PC-3 (cell line): ENCODE measurements at regions of chr9 and their contacts with region 1.

Region 1: GRCh38 chr9:86098824-86099700 is at the start of gene GOLM1:
- DNase-seq: peak; percentile 63
- ATAC-seq: peak; percentile 80
- H3K4me3 ChIP-seq: peak within 1 kb of the TSS; percentile 95
- H3K27ac ChIP-seq: peak within 1 kb of the TSS; percentile 39
- H3K4me1 ChIP-seq: peaks cover 21% of the 10 kb centered on the region
- H3K27me3 ChIP-seq: no peaks in the 10 kb centered on the region
- CTCF ChIP-seq: no peak
- total RNA-seq, gene GOLM1: 55.8 and 56.2 TPM in 2 replicates

Region 2: GRCh38 chr9:85586684-85587083 is 512.4 kb before region 1 on chr9:
- CTCF ChIA-PET with region 1: no interaction called
- POLR2A ChIA-PET with region 1: no interaction called
- intact Hi-C with region 1: no loop called
- DNase-seq: no peak
- ATAC-seq: no peak
- H3K4me3 ChIP-seq: no peak overlapping the region
- H3K27ac ChIP-seq: no peak overlapping the region
- H3K4me1 ChIP-seq: no peaks in the 10 kb centered on the region
- H3K27me3 ChIP-seq: no peaks in the 10 kb centered on the region
- CTCF ChIP-seq: no peak

Region 3: GRCh38 chr9:86046930-86047341 is 52.1 kb before region 1 on chr9:
- CTCF ChIA-PET with region 1: no interaction called
- POLR2A ChIA-PET with region 1: interaction called, 5 read pairs
- intact Hi-C with region 1: loop called (anchors 5 kb)
- DNase-seq: no peak
- ATAC-seq: peak; percentile 58
- H3K4me3 ChIP-seq: no peak overlapping the region
- H3K27ac ChIP-seq: no peak overlapping the region
- H3K4me1 ChIP-seq: peaks cover 11% of the 10 kb centered on the region; the same call in 1 of the 2 replicates
- H3K27me3 ChIP-seq: no peaks in the 10 kb centered on the region
- CTCF ChIP-seq: no peak

Region 4: DNA sequence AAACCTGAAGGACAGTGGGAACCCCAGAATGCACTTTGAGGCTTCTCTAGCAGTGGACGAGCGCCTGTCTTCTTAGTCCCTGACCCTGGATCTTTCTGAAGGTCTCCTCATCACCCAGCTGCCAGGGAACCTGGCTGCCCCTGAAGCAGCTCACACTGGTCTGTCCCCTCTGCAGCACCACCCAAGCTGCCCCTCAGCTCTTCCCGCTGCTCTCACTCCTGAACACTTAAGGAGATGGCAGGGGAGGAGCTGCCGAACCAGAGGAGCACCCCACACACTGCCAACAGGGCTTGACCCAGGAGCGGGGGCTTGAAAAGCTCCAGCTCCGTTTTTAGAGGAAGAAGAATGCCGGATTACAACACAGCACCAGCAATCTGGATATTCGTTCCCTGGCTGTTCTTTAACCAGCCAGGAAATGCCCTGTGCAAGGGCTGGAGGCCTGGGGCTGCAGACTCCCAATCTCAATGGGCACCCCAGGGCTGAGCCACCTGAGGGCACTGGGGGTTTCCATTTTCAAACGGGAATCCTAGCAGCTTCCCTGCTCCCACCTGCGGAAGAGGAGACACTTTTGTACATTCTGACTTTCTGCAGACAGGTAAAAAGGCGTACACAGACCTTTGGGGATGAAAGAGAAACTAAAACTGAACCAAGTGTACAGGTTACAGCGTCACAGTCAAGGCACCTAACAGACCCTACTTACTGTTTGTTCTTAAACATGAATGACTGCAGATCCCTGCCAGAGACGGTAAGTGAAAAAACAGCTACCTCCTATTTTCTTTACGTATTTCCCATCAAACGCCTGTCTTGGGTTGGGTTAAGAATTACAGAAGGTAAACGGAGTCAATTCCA is 36.0 kb before region 1 on chr9:
- CTCF ChIA-PET with region 1: no interaction called
- POLR2A ChIA-PET with region 1: no interaction called
- intact Hi-C with region 1: no loop called
- DNase-seq: no peak
- ATAC-seq: no peak
- H3K4me3 ChIP-seq: no peak overlapping the region
- H3K27ac ChIP-seq: no peak overlapping the region
- H3K4me1 ChIP-seq: no peaks in the 10 kb centered on the region
- H3K27me3 ChIP-seq: no peaks in the 10 kb centered on the region
- CTCF ChIP-seq: no peak

Region 5: GRCh38 chr9:86126998-86127972 is 28.2 kb after region 1 on chr9:
- CTCF ChIA-PET with region 1: no interaction called
- POLR2A ChIA-PET with region 1: interaction called, 3 read pairs
- intact Hi-C with region 1: loop called (anchors 2 kb)
- DNase-seq: peak; percentile 87
- ATAC-seq: peak; percentile 95
- H3K4me3 ChIP-seq: peak overlapping the region; percentile 31; the same call in 1 of the 2 replicates
- H3K27ac ChIP-seq: peak overlapping the region; percentile 59
- H3K4me1 ChIP-seq: peaks cover 28% of the 10 kb centered on the region
- H3K27me3 ChIP-seq: no peaks in the 10 kb centered on the region
- CTCF ChIP-seq: no peak